SK-N-SH (cell line): ENCODE measurements at regions of chr21 and their contacts with region 1.

Region 1: GRCh38 chr21:44892536-44893277 is 19.2 kb upstream of the PTTG1IP start:
- DNase-seq: peak; percentile 86
- H3K4me3 ChIP-seq: peak overlapping the region in 1 of 2 experiments; percentile 50; a peak in 1 of 4 replicates
- H3K27ac ChIP-seq: no peak overlapping the region
- H3K4me1 ChIP-seq: peaks cover 0 to 5% of the 10 kb centered on the region in 2 experiments; a peak in 1 of 4 replicates
- H3K27me3 ChIP-seq: peaks cover 5% of the 10 kb centered on the region; the same call in 1 of the 2 replicates
- CTCF ChIP-seq: peak; percentile 94
- EP300 ChIP-seq: no peak
- RAD21 ChIP-seq: peak; percentile 70

Region 2: GRCh38 chr21:44666401-44667320 is 226.0 kb before region 1 on chr21 and contains the start of gene KRTAP12-2:
- CTCF ChIA-PET with region 1: no interaction called
- POLR2A ChIA-PET with region 1: no interaction called
- DNase-seq: no peak
- H3K4me3 ChIP-seq: no peak within 1 kb of the TSS
- H3K27ac ChIP-seq: no peak within 1 kb of the TSS
- H3K4me1 ChIP-seq: peaks cover 0 to 3% of the 10 kb centered on the region in 2 experiments; a peak in 1 of 4 replicates
- H3K27me3 ChIP-seq: no peaks in the 10 kb centered on the region; the same call in 1 of the 2 replicates
- CTCF ChIP-seq: no peak
- EP300 ChIP-seq: no peak
- RAD21 ChIP-seq: no peak
- polyA plus RNA-seq, gene KRTAP12-2: not detected in 2 replicates

Region 3: DNA sequence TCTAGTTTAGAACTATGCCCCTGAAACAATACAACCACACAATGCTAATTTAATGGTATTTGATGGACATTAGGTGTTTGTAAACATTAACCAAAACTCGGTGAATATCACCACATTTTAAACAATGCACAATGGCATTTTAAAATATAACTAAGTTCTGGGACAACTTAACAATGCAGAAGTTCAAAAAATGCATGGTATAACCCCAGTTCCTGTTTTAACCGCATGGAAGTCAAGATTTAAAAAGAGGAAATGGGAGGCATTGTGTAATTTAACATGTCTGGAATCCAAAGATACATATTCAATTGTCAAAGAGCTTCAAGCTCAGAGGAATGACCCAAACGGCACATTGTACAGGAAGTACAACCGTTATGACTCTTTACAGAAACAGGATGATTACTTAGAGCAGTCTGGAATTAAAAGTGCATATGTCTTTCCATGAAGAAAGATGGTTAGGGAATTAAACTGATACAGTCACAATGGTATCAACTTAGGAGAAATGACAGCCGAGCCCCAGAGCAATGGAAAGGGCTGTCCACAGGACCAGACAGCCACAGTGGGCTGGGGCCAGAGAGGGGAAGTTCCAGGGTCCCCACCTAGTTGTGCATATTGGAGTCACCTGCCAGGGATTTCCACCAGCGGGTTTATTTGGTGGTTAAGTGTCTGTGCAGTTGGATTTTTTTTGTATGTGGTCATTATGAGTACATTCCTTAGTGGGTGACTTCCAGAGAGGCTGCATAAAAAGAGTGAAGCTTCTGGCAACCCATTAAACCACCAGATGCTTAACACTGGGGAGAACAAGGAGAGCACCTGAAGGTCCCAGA is 11.7 kb before region 1 on chr21:
- CTCF ChIA-PET with region 1: interaction called, 14 read pairs
- POLR2A ChIA-PET with region 1: interaction called, 7 read pairs
- DNase-seq: no peak
- H3K4me3 ChIP-seq: no peak overlapping the region
- H3K27ac ChIP-seq: peak overlapping the region in 1 of 2 experiments; percentile 53; a peak in 2 of 4 replicates
- H3K4me1 ChIP-seq: peaks cover 0 to 19% of the 10 kb centered on the region in 2 experiments; a peak in 1 of 4 replicates
- H3K27me3 ChIP-seq: no peaks in the 10 kb centered on the region
- CTCF ChIP-seq: no peak
- EP300 ChIP-seq: peak in 1 of 2 experiments; percentile 43; a peak in 1 of 4 replicates
- RAD21 ChIP-seq: no peak

Region 4: DNA sequence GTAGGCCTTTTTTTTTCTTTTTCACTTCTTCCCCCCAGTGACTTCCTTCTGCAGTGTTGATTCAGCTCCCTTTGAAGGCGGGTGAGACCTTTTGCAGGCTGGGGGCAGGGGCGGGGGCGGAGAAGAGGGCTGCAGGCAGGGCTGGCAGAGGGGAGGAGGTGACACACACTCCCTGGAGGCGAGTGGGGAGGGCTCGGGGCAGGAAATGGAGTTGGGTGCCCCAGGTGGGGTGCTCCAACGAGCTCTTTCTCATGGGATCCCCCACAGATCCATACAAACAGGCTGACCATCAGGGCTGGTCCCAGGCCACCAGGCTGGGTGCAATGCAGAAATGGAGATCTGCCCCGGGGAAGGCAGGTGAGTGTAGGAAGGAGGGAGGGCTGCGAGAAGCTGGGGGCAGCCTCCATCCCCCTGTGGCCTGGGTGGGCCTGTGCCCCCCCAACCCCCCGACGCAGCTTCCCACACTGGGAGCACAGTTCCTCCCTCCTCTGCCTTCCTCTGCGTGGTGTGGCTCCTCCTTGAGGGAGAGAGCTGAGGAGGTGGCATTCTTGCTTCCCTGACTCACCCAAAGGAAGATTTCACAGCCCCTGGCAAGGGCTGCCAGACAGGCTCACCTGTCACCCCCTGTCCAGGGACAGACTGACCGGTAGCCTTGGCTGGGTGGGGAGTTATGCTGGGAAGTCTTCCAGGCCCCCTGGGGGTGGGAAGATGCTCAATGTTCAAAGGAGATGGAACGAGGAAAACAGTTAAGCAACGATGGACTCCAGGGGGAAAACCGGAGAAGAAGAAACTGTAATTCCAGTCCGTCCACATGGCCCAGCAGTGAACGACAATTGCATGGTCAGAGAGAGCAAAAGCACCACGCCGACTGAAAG is 35.1 kb after region 1 on chr21:
- CTCF ChIA-PET with region 1: interaction called, 39 read pairs
- POLR2A ChIA-PET with region 1: no interaction called
- DNase-seq: no peak
- H3K4me3 ChIP-seq: peak overlapping the region in 1 of 2 experiments; percentile 35; a peak in 2 of 4 replicates
- H3K27ac ChIP-seq: peak overlapping the region in 1 of 2 experiments; percentile 35; a peak in 1 of 4 replicates
- H3K4me1 ChIP-seq: peaks cover 16 to 32% of the 10 kb centered on the region in 2 experiments; a peak in 2 of 4 replicates
- H3K27me3 ChIP-seq: peaks cover 27% of the 10 kb centered on the region
- CTCF ChIP-seq: peak; percentile 16; the same call in 1 of the 2 replicates
- EP300 ChIP-seq: 0 out of 4 replicates have a peak, but pooled peaks of 1 of the 2 experiments have one; percentile 6
- RAD21 ChIP-seq: no peak

Region 5: DNA sequence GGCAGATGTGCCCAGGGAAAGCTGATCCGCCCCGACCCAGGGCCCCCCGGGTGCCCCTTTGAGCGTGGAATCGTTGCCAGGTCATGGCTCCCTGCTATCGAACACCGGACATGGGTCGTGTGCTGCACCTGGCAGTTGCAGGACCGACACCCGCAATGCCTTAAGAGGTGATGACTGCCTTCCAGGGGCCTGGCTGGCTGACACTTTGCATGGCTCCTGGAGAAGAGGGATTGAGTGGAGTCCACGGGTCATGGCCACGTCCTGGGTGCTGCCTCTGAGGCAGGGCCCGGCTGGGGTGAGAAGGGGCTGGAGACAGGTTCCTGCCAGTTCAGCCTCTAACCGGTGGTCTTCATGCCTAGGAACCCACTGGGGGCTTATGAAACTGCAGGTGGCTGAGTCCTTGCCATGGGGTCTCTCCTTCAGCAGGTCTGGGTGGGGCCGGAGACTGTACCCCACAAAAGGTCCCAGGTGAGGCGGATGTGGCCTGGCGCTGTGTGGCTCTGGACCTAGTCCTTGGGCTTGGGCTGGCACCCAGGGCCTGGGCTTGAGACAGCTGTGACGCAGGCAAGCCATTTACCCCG is 41.0 kb after region 1 on chr21:
- CTCF ChIA-PET with region 1: interaction called, 39 read pairs
- POLR2A ChIA-PET with region 1: no interaction called
- DNase-seq: no peak
- H3K4me3 ChIP-seq: no peak overlapping the region
- H3K27ac ChIP-seq: no peak overlapping the region
- H3K4me1 ChIP-seq: peaks cover 8 to 11% of the 10 kb centered on the region in 2 experiments; a peak in 2 of 4 replicates
- H3K27me3 ChIP-seq: peaks cover 15% of the 10 kb centered on the region
- CTCF ChIP-seq: no peak
- EP300 ChIP-seq: no peak
- RAD21 ChIP-seq: no peak